H1 (cell line): ENCODE measurements at regions of chr22 and their contacts with region 1.

Region 1: GRCh38 chr22:37396488-37397084 is 30.7 kb downstream of the ELFN2 start:
- DNase-seq: no peak
- H3K4me3 ChIP-seq: no peak overlapping the region
- H3K27ac ChIP-seq: no peak overlapping the region
- H3K4me1 ChIP-seq: peaks cover 0 to 3% (median 0%) of the 10 kb centered on the region in 4 experiments; a peak in 4 of 7 replicates
- H3K27me3 ChIP-seq: no peaks in the 10 kb centered on the region
- CTCF ChIP-seq: no peak
- EP300 ChIP-seq: no peak
- POLR2A ChIP-seq: no peak
- RAD21 ChIP-seq: no peak

Region 2: DNA sequence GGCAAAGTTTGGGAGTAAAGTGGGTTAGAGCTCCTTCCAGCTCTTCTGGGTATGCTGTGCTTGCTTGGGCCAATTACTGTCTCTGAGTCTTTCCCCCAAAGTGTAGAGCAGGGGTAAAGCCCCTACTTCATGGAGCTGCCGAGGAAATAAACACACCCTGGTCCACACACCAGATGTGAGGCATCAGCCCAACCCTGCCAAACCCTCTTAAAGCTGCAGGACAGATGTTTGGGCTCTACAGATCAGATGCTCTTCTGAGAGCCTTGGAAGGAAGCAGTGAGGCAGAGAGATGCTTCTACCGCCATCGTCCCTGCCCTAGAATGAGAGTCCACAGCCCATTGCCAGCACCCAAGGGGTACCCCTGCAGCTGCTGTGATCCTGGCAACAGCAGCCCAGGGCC is 34.0 kb before region 1 on chr22:
- CTCF ChIA-PET with region 1: no interaction called
- POLR2A ChIA-PET with region 1: no interaction called
- DNase-seq: no peak
- H3K4me3 ChIP-seq: no peak overlapping the region
- H3K27ac ChIP-seq: no peak overlapping the region
- H3K4me1 ChIP-seq: no peaks in the 10 kb centered on the region; a peak in 1 of 7 replicates
- H3K27me3 ChIP-seq: peaks cover 0 to 3% (median 0%) of the 10 kb centered on the region in 4 experiments; a peak in 1 of 7 replicates
- CTCF ChIP-seq: no peak
- EP300 ChIP-seq: no peak
- POLR2A ChIP-seq: no peak
- RAD21 ChIP-seq: no peak

Region 3: DNA sequence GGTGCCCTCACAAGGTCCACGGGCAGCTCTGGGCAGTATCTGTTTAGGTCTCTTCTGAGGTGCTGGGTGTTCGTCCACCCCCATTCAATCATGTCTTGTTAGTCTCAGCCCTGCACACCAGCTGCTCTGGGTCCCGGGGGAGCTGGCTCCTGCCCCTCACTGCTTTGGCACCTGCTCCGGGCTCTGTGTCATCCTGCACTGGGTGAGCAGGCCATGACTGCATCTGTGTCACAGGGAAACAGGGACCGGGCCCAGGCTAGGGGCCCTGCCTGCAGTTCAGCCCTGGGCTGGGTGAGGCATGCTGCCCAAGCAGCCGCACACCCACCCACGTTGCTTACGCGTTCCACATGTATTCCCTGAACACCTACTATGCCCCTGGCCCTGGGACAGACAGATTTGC is 13.2 kb before region 1 on chr22:
- CTCF ChIA-PET with region 1: interaction called, 10 read pairs
- POLR2A ChIA-PET with region 1: interaction called, 3 read pairs
- DNase-seq: no peak
- H3K4me3 ChIP-seq: no peak overlapping the region
- H3K27ac ChIP-seq: peak overlapping the region; percentile 42; the same call in 1 of the 2 replicates
- H3K4me1 ChIP-seq: peaks cover 0 to 6% (median 1%) of the 10 kb centered on the region in 4 experiments; a peak in 4 of 7 replicates
- H3K27me3 ChIP-seq: no peaks in the 10 kb centered on the region
- CTCF ChIP-seq: no peak
- EP300 ChIP-seq: no peak
- POLR2A ChIP-seq: no peak
- RAD21 ChIP-seq: no peak